Activated CD4-positive, alpha-beta T cell treated with anti-CD3 and anti-CD28 coated beads for 36 hours (primary cell): ENCODE measurements at regions of chr1 and their contacts with region 1.

Region 1: GRCh38 chr1:25819576-25820246 is at the start of gene MTFR1L:
- DNase-seq: peak; percentile 97
- ATAC-seq: peak; percentile 92
- H3K4me3 Mint-ChIP-seq: peak within 1 kb of the TSS; percentile 87
- H3K27ac Mint-ChIP-seq: peak within 1 kb of the TSS; percentile 93
- H3K4me1 Mint-ChIP-seq: peaks cover 33% of the 10 kb centered on the region
- H3K27me3 Mint-ChIP-seq: no peaks in the 10 kb centered on the region
- total RNA-seq, gene MTFR1L: 27.7 to 30.8 TPM

Region 2: GRCh38 chr1:25239681-25240541 is 579.8 kb before region 1 on chr1:
- CTCF ChIA-PET with region 1: no interaction called
- POLR2A ChIA-PET with region 1: no interaction called
- intact Hi-C with region 1: loop called in 1 of 2 experiments (anchors 10 kb)
- DNase-seq: peak; percentile 96
- ATAC-seq: peak; percentile 91
- H3K4me3 Mint-ChIP-seq: peak overlapping the region; percentile 74
- H3K27ac Mint-ChIP-seq: peak overlapping the region; percentile 89
- H3K4me1 Mint-ChIP-seq: peaks cover 43% of the 10 kb centered on the region
- H3K27me3 Mint-ChIP-seq: no peaks in the 10 kb centered on the region

Region 3: DNA sequence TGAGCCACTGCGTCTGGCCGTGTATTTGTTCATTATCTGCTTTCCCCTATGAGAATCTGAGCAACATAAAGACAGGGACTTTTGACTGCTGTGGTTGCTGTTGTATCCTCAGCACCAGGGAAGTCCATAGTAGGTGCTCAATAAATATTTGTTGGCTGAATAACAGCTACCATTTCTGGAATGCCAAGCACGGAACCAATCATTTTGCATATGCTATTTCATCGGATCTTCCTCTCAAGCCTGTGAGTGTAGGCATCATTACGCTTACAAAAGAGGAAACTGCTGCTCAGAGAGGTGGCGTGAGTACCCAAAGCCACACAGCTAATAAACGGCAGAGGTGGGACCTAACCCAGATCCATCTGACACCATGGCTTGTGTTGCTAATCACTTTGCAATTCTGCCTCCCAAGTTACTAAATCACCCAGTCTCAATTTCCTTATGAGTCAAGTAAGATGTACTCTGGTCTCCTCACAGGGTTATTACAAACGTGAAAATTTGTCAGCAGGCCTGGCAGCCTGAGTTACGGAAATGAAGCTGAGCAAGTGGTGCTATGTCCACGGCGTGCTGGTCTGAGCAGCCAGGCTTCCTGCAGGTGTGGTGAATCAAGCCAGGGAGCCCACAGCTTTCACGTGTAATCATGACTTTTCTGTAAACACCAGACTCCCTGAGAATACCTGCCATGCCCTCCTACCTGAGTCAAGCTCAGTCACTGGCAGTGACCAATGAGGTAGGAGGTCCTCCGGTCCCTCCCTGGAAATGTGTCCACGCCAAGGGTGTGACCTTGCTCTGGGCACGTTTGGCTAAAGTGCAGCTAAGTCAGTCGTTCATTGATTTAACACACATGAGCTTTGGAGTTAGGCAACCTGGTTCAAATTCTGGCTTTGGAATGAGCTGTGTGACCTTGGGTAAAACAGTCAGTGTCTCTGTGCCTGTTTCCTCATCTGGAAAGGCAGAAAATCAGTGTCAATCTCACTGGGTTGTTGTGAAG is 394.3 kb before region 1 on chr1:
- CTCF ChIA-PET with region 1: no interaction called
- POLR2A ChIA-PET with region 1: no interaction called
- intact Hi-C with region 1: loop called (anchors 1 to 10 kb)
- DNase-seq: no peak
- ATAC-seq: no peak
- H3K4me3 Mint-ChIP-seq: no peak overlapping the region
- H3K27ac Mint-ChIP-seq: no peak overlapping the region
- H3K4me1 Mint-ChIP-seq: peaks cover 6% of the 10 kb centered on the region
- H3K27me3 Mint-ChIP-seq: no peaks in the 10 kb centered on the region

Region 4: GRCh38 chr1:25616095-25616986 is 203.4 kb before region 1 on chr1 and contains the start of gene MAN1C1:
- CTCF ChIA-PET with region 1: interaction called, 3 read pairs
- POLR2A ChIA-PET with region 1: no interaction called
- intact Hi-C with region 1: loop called in 1 of 2 experiments (anchors 1 kb)
- DNase-seq: peak; percentile 85
- ATAC-seq: peak; percentile 60
- H3K4me3 Mint-ChIP-seq: peak within 1 kb of the TSS; percentile 76
- H3K27ac Mint-ChIP-seq: peak within 1 kb of the TSS; percentile 52
- H3K4me1 Mint-ChIP-seq: peaks cover 51% of the 10 kb centered on the region
- H3K27me3 Mint-ChIP-seq: peaks cover 11% of the 10 kb centered on the region
- total RNA-seq, gene MAN1C1: 10.0 to 10.1 TPM

Region 5: GRCh38 chr1:25874934-25875855 is 55.5 kb after region 1 on chr1 and contains the start of gene PAQR7:
- CTCF ChIA-PET with region 1: no interaction called
- POLR2A ChIA-PET with region 1: no interaction called
- intact Hi-C with region 1: loop called in 1 of 2 experiments (anchors 1 kb)
- DNase-seq: peak; percentile 78
- ATAC-seq: peak; percentile 86
- H3K4me3 Mint-ChIP-seq: peak within 1 kb of the TSS; percentile 82
- H3K27ac Mint-ChIP-seq: peak within 1 kb of the TSS; percentile 63
- H3K4me1 Mint-ChIP-seq: peaks cover 5% of the 10 kb centered on the region
- H3K27me3 Mint-ChIP-seq: peaks cover 2% of the 10 kb centered on the region
- total RNA-seq, gene PAQR7: 3.9 to 4.4 TPM

Region 6: DNA sequence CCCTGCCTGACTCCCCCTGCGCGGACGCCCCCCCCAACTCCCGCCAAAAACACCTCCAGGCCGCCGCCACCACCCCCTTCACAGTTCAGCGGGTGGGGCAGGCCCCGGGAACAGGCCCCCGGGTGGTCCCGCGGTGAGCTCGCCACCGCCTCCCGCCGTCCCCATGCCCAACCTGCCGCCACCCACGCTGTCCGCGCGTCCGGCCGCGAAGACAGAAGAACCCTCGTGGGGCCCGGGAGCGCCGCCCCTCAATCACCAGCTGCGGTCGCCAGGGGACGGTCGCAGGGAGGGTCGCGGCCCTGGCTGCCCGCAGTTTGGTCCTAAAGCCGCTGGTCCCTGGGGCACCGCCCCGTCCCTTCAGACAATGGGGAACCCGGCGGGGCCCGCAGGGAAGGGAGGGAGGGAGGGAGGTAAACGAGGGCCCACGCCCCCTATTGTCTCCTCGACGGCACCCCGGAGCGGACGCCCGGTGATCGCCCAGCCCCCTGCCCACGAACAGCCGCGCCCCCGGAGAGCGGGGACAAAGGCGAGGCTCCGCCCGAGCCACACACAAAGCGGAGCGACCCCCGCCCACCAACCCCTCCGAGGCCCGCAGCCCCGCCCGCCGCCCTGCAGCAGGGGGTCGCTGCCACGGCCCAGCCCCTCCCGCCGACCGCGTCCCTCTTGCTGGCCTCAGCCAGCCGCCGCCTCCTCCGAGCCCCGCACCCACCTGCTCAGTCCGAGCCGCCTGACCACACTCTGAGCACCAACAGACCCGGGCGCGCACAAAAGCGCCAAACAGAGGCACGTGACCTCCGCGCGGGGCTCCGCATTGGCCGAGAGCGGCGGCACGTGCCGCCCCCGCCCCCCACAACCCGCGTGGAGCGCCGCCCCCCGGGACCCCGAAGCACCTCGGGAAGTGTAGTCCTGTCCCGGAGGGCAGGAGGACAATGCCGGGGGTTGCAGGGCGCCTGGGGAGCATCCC is 86.3 kb after region 1 on chr1 and contains the start of gene STMN1:
- CTCF ChIA-PET with region 1: no interaction called
- POLR2A ChIA-PET with region 1: no interaction called
- intact Hi-C with region 1: loop called in 1 of 2 experiments (anchors 1 kb)
- DNase-seq: peak; percentile 96
- ATAC-seq: peak; percentile 81
- H3K4me3 Mint-ChIP-seq: peak within 1 kb of the TSS; percentile 84
- H3K27ac Mint-ChIP-seq: peak within 1 kb of the TSS; percentile 83
- H3K4me1 Mint-ChIP-seq: peaks cover 25% of the 10 kb centered on the region
- H3K27me3 Mint-ChIP-seq: no peaks in the 10 kb centered on the region
- total RNA-seq, gene STMN1: 557 to 771 TPM

Region 7: DNA sequence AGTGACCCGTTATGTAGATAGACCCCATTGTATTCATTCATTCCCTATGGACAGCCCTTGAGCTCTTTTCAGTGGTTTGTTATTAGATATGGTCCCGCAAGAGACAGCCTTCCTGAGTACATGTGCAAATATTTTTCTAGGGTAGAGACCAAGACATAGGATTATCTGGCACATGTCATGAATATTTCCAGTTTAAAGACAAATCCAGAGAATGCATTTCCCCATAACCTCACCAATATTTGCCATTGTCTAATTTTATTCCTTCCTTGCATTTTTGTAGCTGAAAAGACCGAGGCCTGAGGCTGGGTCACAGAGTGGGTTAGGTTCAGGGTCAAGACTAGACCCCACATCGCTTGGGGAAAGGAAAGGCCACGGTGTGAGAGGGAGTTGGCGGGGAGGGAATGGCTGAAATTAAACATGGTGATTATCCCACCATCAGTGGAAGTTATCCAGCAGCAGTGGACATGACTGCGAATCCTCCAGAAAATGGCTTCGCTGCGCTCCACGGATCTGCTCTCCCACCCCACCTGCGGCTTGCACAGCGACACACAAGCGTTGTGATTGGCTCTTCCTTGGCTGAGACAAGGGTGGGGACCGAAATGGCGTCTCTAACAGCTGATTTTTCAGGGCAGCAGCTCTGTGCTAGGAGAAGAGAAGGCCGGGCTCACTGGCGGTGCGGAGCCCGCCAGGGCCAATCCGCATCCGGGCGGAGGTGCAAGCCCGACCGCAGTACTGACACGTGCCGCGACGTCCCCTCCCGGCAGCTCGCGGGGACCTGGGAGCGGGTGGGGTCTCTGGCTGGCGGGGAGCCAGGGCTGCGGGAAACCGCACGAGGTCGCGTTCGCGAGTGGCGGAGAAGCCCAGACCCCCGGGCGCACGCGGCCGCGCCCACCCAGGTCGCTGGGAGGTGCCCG is 102.6 kb after region 1 on chr1:
- CTCF ChIA-PET with region 1: no interaction called
- POLR2A ChIA-PET with region 1: no interaction called
- intact Hi-C with region 1: no loop called
- DNase-seq: peak; percentile 65
- ATAC-seq: peak; percentile 78
- H3K4me3 Mint-ChIP-seq: peak overlapping the region; percentile 62
- H3K27ac Mint-ChIP-seq: peak overlapping the region; percentile 56
- H3K4me1 Mint-ChIP-seq: peaks cover 31% of the 10 kb centered on the region
- H3K27me3 Mint-ChIP-seq: peaks cover 8% of the 10 kb centered on the region

Region 8: GRCh38 chr1:25989440-25990234 is 169.9 kb after region 1 on chr1:
- CTCF ChIA-PET with region 1: no interaction called
- POLR2A ChIA-PET with region 1: no interaction called
- intact Hi-C with region 1: no loop called
- DNase-seq: no peak
- ATAC-seq: no peak
- H3K4me3 Mint-ChIP-seq: peak overlapping the region; percentile 73
- H3K27ac Mint-ChIP-seq: peak overlapping the region; percentile 92
- H3K4me1 Mint-ChIP-seq: peaks cover 63% of the 10 kb centered on the region
- H3K27me3 Mint-ChIP-seq: no peaks in the 10 kb centered on the region

Region 9: GRCh38 chr1:26112407-26112775 is 292.7 kb after region 1 on chr1:
- CTCF ChIA-PET with region 1: no interaction called
- POLR2A ChIA-PET with region 1: no interaction called
- intact Hi-C with region 1: no loop called
- DNase-seq: peak; percentile 45
- ATAC-seq: no peak
- H3K4me3 Mint-ChIP-seq: peak overlapping the region; percentile 96
- H3K27ac Mint-ChIP-seq: peak overlapping the region; percentile 91
- H3K4me1 Mint-ChIP-seq: peaks cover 27% of the 10 kb centered on the region
- H3K27me3 Mint-ChIP-seq: no peaks in the 10 kb centered on the region